ENCODE measurements at regions of chr1 and their contacts with region 1.

Region 1: GRCh38 chr1:146012737-146013403 is 8.7 kb downstream of the HJV start:
- DNase-seq: peak; percentile 75
- H3K4me3 ChIP-seq: no peak overlapping the region
- H3K27ac ChIP-seq: no peak overlapping the region
- H3K4me1 ChIP-seq: no peaks in the 10 kb centered on the region
- H3K27me3 ChIP-seq: no peaks in the 10 kb centered on the region
- CTCF ChIP-seq: peak; percentile 70

Region 2: DNA sequence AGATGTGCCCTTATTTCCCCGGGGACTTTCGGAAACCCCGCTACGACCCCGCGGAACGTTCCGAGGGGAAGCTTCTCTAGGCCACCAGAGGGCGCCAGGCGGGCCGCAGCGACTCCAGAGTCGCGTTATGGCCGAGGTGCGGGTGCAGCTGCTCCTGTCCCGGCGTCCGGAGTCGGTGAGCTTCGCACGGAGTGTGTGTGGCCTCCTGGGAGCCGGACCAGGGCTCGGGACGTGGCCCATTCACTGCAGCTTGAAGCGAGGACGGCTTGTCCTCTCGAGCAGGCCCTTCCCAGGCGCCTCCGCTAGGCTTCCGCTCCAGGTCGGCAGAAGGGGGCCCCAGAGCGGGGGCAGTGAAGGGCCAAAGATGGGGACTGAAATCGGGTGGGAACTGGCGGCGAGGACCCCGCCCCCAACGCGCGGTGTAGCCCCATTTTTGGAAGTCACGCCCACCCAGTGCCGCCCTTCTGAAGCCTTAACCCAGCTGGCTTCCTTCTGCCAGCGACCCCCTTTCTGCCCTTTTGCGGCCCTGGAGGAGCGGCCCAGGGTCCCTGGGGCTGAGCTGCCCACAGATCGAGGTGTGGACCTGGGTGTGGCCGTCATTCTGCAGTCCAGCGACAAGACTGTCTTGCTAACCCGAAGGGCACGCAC is 167.2 kb before region 1 on chr1 and contains the start of gene NUDT17:
- intact Hi-C with region 1: loop called (anchors 5 kb)
- DNase-seq: peak; percentile 80
- H3K4me3 ChIP-seq: peak within 1 kb of the TSS; percentile 43
- H3K27ac ChIP-seq: peak within 1 kb of the TSS; percentile 10
- H3K4me1 ChIP-seq: peaks cover 10% of the 10 kb centered on the region
- H3K27me3 ChIP-seq: no peaks in the 10 kb centered on the region
- CTCF ChIP-seq: peak; percentile 97
- total RNA-seq, gene NUDT17: 0.69 to 0.82 TPM

Region 3: DNA sequence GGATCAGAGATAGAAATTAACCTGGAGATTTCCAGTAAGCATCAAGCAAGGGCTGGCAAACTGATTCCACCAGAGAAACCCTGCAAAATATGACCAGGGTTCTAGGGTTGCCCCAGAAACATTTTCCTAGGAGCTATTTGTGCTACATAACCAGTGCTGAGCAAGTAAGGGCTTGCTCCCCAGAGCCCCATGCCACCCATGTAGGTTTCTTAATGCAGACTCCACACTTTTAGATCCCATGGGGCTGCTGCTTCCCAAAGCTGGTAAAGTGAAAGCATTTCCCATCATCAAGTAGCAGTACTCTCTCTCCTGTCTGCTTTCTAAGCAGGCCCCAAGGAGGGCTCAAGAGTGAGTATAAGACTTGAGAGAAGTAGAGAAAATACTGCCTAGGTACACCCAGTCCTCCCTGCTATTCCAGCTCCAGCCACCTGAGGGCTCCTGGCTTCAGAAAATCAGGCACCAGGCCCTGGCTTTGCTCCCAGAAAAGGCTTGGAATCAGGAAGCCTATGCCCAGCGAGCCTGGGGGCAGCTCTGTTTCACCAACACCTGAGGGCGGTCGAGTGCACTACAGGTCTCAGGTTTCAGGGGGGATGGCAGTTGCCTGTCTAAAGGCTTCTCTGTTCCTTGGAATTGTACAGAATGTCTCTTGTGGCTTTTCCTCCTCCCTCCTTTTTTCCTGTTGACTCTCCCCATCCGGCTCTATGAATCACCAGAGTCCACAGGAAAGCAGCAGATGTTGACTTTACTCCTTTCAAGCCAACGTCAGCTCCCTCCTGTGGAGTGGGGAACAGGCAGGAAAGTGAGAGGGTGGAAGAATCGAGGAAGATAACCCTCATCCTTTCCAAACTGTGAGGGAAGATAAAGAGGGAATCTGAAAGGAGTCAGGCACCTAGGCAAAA is 121.0 kb before region 1 on chr1:
- intact Hi-C with region 1: loop called (anchors 2 kb)
- DNase-seq: peak; percentile 97
- H3K4me3 ChIP-seq: no peak overlapping the region
- H3K27ac ChIP-seq: peak overlapping the region; percentile 84
- H3K4me1 ChIP-seq: peaks cover 7% of the 10 kb centered on the region
- H3K27me3 ChIP-seq: no peaks in the 10 kb centered on the region
- CTCF ChIP-seq: peak; percentile 90

Region 4: DNA sequence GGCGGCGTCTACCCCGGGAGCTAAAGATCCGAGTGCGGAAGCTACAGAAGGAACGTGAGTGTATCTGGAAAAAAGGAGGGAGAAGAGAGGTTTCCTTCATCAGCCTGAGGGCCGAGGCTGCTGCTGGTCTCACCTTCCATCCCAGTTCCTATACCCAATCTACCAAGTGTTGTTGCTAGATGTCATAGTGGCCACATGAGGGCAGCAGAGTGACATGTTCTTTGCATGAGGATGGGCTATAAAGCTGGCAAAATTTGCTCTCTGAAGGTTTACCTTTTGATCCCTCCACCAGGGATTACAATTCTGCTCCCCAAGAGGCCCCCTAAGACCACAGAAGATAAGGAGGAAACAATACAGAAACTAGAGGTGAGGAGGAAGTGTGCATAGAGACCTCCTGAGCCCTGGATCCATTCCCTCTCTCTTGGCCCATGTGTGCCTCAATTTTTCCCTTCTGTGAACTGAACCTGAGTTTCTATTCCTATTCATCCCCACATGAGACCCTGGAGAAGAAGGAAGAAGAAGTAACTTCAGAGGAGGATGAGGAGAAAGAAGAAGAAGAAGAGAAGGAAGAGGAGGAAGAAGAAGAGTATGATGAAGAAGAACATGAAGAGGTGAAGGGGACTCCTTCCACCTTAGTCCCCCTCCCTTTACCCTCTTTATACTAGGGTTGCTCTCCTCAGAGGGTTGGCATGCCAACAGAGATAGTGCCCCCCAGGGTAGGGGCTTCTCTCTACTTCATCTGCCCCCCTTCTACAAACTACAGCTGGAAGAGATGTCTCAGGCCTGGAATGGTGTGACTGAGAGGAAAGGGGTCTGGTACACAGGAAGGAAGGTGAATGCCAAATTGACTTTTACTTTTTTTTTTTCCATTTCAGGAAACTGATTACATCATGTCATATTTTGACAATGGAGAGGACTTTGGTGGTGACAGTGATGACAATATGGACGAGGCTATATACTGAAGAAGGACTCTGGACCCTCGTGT is 35.1 kb before region 1 on chr1:
- intact Hi-C with region 1: loop called (anchors 2 kb)
- DNase-seq: peak; percentile 76
- H3K4me3 ChIP-seq: no peak overlapping the region
- H3K27ac ChIP-seq: peak overlapping the region; percentile 99
- H3K4me1 ChIP-seq: peaks cover 25% of the 10 kb centered on the region
- H3K27me3 ChIP-seq: no peaks in the 10 kb centered on the region
- CTCF ChIP-seq: peak; percentile 70

Measured in colonic mucosa (tissue), 4 donors.